Left colon (tissue), 2 donors: ENCODE measurements at regions of chr11 and their contacts with region 1.

Region 1: DNA sequence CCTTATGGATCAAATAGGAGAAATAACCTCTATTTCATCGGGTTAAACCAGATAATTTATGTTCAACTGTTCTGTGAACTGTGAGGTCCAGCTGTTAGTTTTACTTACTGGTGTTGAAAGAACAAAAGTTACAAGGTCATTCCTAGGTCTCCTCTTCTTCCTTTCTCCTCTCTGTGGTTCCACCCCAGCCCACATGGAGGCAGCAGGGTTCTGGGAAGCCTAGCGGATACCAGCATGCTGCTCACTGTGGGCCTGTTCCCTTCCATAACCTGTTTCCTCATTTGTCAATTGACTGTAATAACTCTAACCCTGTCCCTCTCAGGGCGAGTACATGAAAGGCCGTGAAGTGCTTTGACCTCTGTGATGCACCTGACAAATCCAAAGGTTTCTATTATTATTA is 27.8 kb downstream of the RELT start:
- DNase-seq: no peak
- ATAC-seq: peak; percentile 90

Region 2: DNA sequence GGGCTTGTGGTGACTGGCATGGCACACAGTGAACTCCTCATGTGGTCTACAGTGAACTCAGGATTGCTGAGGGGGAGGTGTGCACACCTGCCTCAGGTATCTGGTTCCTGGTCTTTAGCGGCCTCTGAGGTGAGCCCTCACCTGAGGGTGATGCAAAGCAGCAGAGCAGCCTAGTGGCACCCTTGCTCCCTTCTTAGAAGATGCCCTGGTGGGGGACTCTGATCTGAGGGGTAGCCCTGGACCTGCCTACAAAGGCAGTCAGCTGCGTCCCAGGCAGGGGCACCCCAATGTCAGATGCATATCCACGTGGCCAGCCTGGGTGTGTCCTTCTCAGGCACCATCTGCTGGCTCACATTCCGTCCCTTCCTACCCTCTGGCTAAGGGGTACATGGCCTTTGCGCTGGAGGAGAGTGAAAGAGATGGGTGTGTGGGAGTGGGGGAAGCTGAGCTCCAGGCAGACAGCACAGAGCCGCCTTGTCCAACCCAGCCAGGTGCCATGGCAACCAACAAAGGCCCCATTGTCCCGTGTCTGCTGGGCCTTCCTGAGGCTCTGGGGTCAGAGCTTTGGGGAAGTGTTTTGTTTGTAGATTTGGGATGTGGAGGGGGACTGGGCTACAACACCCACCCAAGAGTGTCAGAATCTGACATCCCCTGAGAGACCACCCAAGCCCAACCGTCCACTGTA is 248.1 kb after region 1 on chr11:
- intact Hi-C with region 1: loop called in 1 of 2 experiments (anchors 10 kb)
- DNase-seq: no peak
- ATAC-seq: peak; percentile 29